Heart left ventricle (tissue), 16 donors: ENCODE measurements at regions of chr15 and their contacts with region 1.

Region 1: DNA sequence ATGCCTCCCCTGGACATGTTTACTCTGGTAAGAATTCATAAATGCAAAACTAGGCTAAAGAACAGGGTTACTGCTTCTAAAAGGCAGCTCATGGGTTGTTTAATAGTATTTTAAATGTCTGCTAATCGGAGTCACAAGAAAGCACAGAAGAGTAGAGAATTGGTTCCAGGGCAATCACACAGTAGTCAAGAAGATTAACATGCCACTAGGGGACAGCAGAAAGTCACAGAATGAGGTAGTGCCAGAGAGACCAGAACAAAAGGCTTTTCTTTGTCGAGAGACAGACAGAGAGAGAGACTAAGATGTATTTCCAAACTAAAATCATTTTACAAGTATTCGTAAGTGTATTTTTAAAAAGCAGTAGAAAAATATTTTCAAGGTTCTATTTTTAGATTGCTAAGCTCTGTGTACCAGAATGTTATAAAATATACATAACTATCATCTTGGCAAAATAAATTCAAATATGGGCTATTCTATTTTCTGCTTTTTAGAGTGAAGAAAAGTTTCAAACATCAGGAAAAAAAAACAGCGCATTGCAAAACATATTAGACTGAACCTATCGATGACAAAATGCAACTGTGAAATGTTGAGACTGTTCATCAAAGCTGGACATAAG is 78.3 kb upstream of the CDIN1 start:
- DNase-seq: peak in 2 of 5 donors; percentile 21 to 37
- ATAC-seq: peak; percentile 85 to 96 (median 94)
- H3K4me3 ChIP-seq: no peak overlapping the region
- H3K27ac ChIP-seq: peak overlapping the region in 6 of 12 donors; percentile 3 to 36 (median 23)
- H3K4me1 ChIP-seq: peaks cover 0 to 15% (median 2%) of the 10 kb centered on the region in 12 donors
- H3K27me3 ChIP-seq: no peaks in the 10 kb centered on the region
- CTCF ChIP-seq: peak; percentile 41 to 82 (median 70)
- POLR2A ChIP-seq: no peak

Region 2: GRCh38 chr15:35519541-35520149 is 981.5 kb before region 1 on chr15:
- intact Hi-C with region 1: loop called in 1 of 10 experiments (anchors 10 kb)
- DNase-seq: no peak
- ATAC-seq: peak in 3 of 4 donors; percentile 61 to 85 (median 80)
- H3K4me3 ChIP-seq: no peak overlapping the region
- H3K27ac ChIP-seq: no peak overlapping the region
- H3K4me1 ChIP-seq: peaks cover 0 to 27% (median 8%) of the 10 kb centered on the region in 12 donors
- H3K27me3 ChIP-seq: no peaks in the 10 kb centered on the region
- CTCF ChIP-seq: peak; percentile 44 to 76 (median 68)
- POLR2A ChIP-seq: no peak

Region 3: GRCh38 chr15:36579792-36580431 is 78.7 kb after region 1 on chr15:
- intact Hi-C with region 1: loop called in 1 of 10 experiments (anchors 5 kb)
- DNase-seq: peak in 4 of 5 donors; percentile 31 to 66 (median 44)
- ATAC-seq: peak in 3 of 4 donors; percentile 23 to 54 (median 36)
- H3K4me3 ChIP-seq: peak overlapping the region; percentile 15 to 83 (median 74)
- H3K27ac ChIP-seq: peak overlapping the region; percentile 18 to 91 (median 88)
- H3K4me1 ChIP-seq: peaks cover 0 to 41% (median 12%) of the 10 kb centered on the region in 12 donors
- H3K27me3 ChIP-seq: no peaks in the 10 kb centered on the region
- CTCF ChIP-seq: peak in 1 of 12 donors; percentile 0
- POLR2A ChIP-seq: no peak

Region 4: DNA sequence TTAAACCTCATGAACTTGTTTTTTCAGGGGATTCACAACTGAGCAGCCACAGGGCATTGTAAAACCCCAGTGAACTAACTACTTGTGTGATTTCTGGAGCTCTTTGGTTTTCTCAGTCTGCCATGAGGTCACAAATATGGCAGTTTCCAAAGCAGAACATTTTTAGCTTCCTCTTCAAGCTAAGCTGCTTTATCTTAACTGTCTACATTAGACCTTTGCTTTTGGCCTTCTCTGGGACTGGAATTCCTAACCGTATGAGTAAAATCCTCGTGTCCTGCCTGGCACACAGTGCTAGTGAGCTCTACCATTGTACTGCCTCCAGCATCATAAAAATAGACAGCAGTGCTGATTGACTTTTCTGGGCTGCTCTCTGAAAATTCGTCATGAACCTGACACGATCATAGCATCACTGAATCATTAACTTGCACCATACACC is 100.3 kb after region 1 on chr15:
- intact Hi-C with region 1: loop called in 2 of 10 experiments (anchors 5 to 10 kb)
- DNase-seq: peak in 4 of 5 donors; percentile 73 to 80 (median 77)
- ATAC-seq: peak; percentile 86 to 92 (median 90)
- H3K4me3 ChIP-seq: peak overlapping the region in 2 of 12 donors; percentile 15 to 17
- H3K27ac ChIP-seq: peak overlapping the region; percentile 79 to 97 (median 92)
- H3K4me1 ChIP-seq: peaks cover 0 to 44% (median 16%) of the 10 kb centered on the region in 12 donors
- H3K27me3 ChIP-seq: no peaks in the 10 kb centered on the region
- CTCF ChIP-seq: no peak
- POLR2A ChIP-seq: no peak

Region 5: DNA sequence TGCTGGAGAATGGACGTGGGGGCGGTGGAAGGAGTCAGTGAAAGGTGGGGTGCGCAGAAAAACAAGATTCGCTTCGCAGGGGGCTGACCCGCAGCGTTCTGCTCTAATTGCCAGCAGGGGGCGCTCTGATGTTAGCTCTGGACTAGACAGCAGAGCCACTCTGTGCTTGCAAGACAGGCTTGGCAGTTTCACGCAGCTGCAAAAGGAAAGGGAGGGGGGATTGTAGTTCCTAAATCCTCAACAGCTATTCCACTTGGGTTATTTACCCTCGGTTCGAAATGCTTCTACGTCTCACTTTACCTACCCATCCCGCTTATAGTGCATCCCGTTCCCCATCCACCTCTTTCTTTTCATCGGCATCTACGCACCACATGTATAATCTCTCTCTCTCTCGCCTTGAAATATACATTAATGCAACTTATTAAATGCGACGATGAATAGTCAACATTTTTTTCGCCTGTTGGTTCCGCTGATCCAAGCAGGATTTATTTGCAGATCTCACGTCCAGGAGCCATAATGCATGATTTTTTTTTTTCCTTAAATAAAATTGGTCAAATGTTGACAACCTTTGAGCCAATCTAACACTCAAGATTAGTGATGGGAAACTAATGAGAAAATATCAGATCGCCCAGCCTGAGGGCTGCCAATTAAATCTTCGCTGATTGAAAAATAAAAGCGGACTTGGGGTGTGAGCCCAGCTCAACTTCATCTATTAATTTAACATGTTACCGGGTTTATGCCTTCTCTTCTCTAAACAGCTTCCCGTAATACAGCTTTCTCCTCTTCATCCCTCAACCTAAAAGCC is 382.7 kb after region 1 on chr15:
- intact Hi-C with region 1: loop called in 2 of 10 experiments (anchors 10 kb)
- DNase-seq: peak; percentile 86 to 92 (median 89)
- ATAC-seq: peak; percentile 86 to 91 (median 90)
- H3K4me3 ChIP-seq: peak overlapping the region in 11 of 12 donors; percentile 10 to 56 (median 43)
- H3K27ac ChIP-seq: peak overlapping the region in 1 of 12 donors; percentile 79
- H3K4me1 ChIP-seq: peaks cover 0 to 32% (median 3%) of the 10 kb centered on the region in 12 donors
- H3K27me3 ChIP-seq: peaks cover 0 to 94% (median 20%) of the 10 kb centered on the region in 9 donors
- CTCF ChIP-seq: peak; percentile 73 to 91 (median 82)
- POLR2A ChIP-seq: no peak

Region 6: DNA sequence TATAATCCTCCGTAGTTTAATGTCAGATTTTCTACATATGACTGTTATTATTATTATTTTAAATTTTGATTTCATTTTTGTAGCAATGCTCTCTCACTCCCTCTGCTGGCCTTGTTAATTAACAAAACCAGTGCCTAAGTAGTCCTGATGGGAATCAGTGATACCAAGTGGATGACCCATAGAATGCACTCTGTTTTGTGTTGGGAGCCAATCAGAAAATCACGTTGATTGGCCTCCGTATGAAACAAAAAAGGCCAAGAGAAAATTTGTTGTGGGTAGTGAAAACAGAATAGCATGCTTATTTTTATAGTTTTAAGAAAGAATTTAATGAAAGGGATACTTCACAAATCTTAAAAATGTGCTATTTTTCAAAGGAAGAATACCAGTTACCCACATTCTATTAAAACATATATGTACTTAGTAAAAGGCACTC is 633.5 kb after region 1 on chr15:
- intact Hi-C with region 1: loop called in 6 of 10 experiments (anchors 10 kb)
- DNase-seq: no peak
- ATAC-seq: peak in 1 of 4 donors; percentile 81
- H3K4me3 ChIP-seq: no peak overlapping the region
- H3K27ac ChIP-seq: no peak overlapping the region
- H3K4me1 ChIP-seq: peaks cover 0 to 5% (median 0%) of the 10 kb centered on the region in 12 donors
- H3K27me3 ChIP-seq: no peaks in the 10 kb centered on the region
- CTCF ChIP-seq: peak; percentile 49 to 82 (median 67)
- POLR2A ChIP-seq: no peak